GM12878 (cell line): ENCODE measurements at regions of chr1 and their contacts with region 1.

Region 1: GRCh38 chr1:67713057-67713846 is 28.3 kb downstream of the GADD45A start:
- DNase-seq: no peak
- ATAC-seq: peak; percentile 70
- H3K4me3 ChIP-seq: no peak overlapping the region
- H3K27ac ChIP-seq: no peak overlapping the region
- H3K4me1 ChIP-seq: no peaks in the 10 kb centered on the region
- H3K27me3 ChIP-seq: no peaks in the 10 kb centered on the region
- CTCF ChIP-seq: no peak
- EP300 ChIP-seq: no peak
- POLR2A ChIP-seq: no peak
- RAD21 ChIP-seq: no peak

Region 2: DNA sequence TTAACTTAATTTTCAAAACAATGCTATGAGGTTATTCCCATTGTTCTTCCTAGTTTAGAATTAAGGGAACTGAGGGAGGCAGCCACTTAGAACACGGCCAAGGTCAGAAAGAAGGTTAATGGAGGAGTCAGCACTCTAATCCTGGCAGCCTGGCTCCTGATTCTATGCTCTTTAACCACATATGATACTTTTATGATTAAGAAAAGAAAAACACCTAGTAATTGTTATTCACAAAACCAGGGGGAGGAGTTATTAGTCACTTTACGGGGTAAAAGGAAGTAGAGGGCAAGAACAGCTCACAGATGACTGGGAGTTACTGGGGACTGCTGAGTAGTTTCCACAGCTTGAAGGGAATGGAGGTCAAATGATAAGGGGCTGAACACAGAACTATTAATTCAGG is 10.4 kb after region 1 on chr1:
- CTCF ChIA-PET with region 1: interaction called, 3 read pairs
- POLR2A ChIA-PET with region 1: interaction called, 3 read pairs
- RAD21 ChIA-PET with region 1: interaction called, 5 read pairs
- SMC1A ChIA-PET with region 1: interaction called, 10 read pairs
- in situ Hi-C with region 1: no loop called
- intact Hi-C with region 1: no loop called
- DNase-seq: no peak
- ATAC-seq: peak; percentile 91
- H3K4me3 ChIP-seq: no peak overlapping the region
- H3K27ac ChIP-seq: no peak overlapping the region
- H3K4me1 ChIP-seq: peaks cover 3% of the 10 kb centered on the region; the same call in 1 of the 2 replicates
- H3K27me3 ChIP-seq: no peaks in the 10 kb centered on the region
- CTCF ChIP-seq: no peak
- EP300 ChIP-seq: no peak
- POLR2A ChIP-seq: no peak
- RAD21 ChIP-seq: no peak